Activated CD4-positive, alpha-beta memory T cell treated with anti-CD3 and anti-CD28 coated beads, Interleukin-2, amount 10 ng/mL, durations not matched to agents 7 days and 5 days (primary cell): ENCODE measurements at regions of chr3 and their contacts with region 1.

Region 1: GRCh38 chr3:52291508-52292181 is 4.0 kb downstream of the GLYCTK start:
- DNase-seq: peak; percentile 47
- H3K4me3 Mint-ChIP-seq: no peak overlapping the region
- H3K27ac Mint-ChIP-seq: peak overlapping the region; percentile 35
- H3K4me1 Mint-ChIP-seq: peaks cover 33% of the 10 kb centered on the region
- H3K27me3 Mint-ChIP-seq: no peaks in the 10 kb centered on the region

Region 2: DNA sequence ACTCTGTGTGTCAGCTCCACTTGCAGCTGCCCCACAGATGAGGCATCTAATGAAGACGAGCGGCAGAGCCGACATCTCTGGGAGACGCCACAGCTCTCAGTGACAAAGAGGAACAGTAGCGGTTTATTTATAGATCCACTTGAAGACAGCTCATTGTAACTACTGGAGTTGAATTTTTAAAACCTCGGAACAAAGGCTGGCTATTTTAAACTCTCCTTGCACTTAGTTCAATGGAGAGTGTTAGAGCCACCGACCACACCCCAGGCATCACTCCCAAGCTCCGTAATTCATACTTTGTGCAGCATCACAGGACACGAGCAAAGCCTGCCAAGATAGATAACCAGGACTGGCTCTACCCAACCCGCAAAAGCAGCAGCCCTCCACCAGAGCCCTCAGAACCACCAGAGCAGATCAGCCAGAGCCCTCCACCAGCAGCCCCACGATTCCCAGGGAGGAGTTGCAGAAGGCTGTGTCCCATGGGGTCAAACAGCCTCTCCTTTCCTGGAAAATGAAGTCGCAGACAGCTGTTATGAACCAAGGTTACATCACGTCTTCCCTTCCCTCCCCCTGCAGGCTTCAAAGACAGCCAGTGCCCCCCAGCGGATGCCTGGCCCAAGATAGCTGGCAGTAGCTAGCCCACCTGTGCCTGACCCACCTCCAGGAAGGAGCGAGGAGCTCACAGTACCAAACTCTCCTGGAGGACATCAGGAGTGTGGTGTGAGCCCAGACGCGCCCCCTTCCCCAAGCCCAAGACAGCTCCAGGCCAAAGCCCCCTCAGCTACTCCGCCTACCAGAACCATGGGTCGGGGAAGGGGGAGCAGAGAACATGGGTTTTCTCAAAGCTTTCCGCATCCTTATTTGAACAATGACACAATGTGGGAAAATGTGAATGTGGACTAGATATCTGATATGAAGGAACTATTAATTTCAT is 183.1 kb before region 1 on chr3:
- CTCF ChIA-PET with region 1: no interaction called
- POLR2A ChIA-PET with region 1: no interaction called
- DNase-seq: no peak
- H3K4me3 Mint-ChIP-seq: no peak overlapping the region
- H3K27ac Mint-ChIP-seq: no peak overlapping the region
- H3K4me1 Mint-ChIP-seq: peaks cover 1% of the 10 kb centered on the region
- H3K27me3 Mint-ChIP-seq: no peaks in the 10 kb centered on the region

Region 3: GRCh38 chr3:52162250-52162872 is 129.3 kb before region 1 on chr3:
- CTCF ChIA-PET with region 1: no interaction called
- POLR2A ChIA-PET with region 1: no interaction called
- DNase-seq: no peak
- H3K4me3 Mint-ChIP-seq: no peak overlapping the region
- H3K27ac Mint-ChIP-seq: no peak overlapping the region
- H3K4me1 Mint-ChIP-seq: no peaks in the 10 kb centered on the region
- H3K27me3 Mint-ChIP-seq: peaks cover 8% of the 10 kb centered on the region

Region 4: GRCh38 chr3:52231502-52232293 is 59.9 kb before region 1 on chr3:
- CTCF ChIA-PET with region 1: interaction called, 8 read pairs
- POLR2A ChIA-PET with region 1: interaction called, 1,001 read pairs
- DNase-seq: peak; percentile 87
- H3K4me3 Mint-ChIP-seq: no peak overlapping the region
- H3K27ac Mint-ChIP-seq: peak overlapping the region; percentile 63
- H3K4me1 Mint-ChIP-seq: peaks cover 45% of the 10 kb centered on the region
- H3K27me3 Mint-ChIP-seq: no peaks in the 10 kb centered on the region

Region 5: DNA sequence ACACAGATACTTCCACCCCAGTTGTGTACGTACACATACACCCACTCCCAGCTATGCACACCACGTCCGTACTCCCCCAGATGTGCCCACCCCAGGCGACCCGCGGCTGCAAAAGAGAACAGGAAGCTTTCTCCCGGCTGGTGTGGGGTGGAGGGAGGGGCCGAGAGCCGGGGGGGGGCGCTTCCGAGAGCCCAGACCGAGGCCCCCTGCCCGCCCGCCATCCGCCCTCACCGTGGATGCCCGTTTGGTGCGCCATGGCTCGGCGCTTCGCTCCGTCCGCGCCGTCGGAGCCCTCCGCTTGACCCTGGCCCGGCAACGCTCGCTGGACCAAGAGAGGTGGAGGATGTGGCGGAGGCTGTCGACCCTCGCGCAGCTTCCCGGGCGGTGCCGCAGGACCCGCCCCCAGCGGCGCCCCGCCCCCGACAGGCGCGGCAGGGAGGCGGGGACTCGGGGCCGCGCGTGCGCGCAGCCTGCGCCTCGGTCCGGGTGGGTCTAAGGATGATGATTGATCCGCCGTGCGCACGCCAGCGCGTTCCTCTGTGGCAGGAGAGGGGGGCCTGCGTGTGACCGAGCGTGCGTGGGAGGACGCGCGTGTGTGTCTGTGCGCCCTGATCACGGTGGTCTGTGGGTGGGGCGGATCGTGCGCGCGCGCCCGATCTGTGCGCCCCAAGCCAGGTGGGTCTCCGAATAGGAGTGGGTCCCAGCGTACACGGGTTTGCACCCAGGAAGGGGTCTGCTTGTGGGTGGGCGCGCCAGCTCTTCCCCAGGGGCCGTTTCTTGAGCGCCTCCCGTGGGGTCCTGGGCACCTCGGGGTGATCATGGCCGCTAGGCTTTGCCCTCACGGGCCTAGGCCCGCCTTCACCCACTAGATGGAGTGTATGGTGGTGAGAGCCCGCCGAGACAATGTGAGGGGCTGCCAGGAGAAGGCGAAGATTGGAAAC is 52.6 kb before region 1 on chr3 and contains the start of gene TWF2:
- CTCF ChIA-PET with region 1: interaction called, 11 read pairs
- POLR2A ChIA-PET with region 1: interaction called, 1,001 read pairs
- DNase-seq: peak; percentile 87
- H3K4me3 Mint-ChIP-seq: peak within 1 kb of the TSS; percentile 95
- H3K27ac Mint-ChIP-seq: peak within 1 kb of the TSS; percentile 97
- H3K4me1 Mint-ChIP-seq: peaks cover 77% of the 10 kb centered on the region
- H3K27me3 Mint-ChIP-seq: no peaks in the 10 kb centered on the region
- total RNA-seq, gene TWF2: 118 to 119 TPM

Region 6: DNA sequence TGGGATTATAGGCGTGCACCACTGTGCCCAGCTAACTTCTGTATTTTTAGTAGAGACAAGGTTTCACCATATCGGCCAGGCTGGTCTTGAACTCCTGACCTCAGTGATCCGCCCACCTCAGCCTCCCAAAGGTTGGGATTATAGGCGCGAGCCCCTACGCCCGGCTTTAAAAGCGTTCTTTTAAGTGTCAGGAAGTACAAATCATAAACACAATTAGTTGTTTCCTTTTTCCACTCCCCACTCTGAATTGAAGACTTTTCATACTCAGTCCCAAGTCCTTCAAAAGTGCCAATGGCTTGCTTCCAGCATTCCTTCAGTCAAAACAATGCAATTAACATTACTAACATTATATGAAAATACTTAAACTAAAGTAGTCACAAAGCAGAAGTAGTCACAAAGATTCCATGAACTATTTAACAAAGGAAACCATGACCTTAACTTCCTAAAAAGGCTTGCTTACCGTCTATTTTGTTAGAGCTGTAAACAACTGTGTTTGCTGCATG is 21.3 kb before region 1 on chr3:
- CTCF ChIA-PET with region 1: interaction called, 5 read pairs
- POLR2A ChIA-PET with region 1: interaction called, 135 read pairs
- DNase-seq: no peak
- H3K4me3 Mint-ChIP-seq: peak overlapping the region; percentile 72
- H3K27ac Mint-ChIP-seq: peak overlapping the region; percentile 91
- H3K4me1 Mint-ChIP-seq: peaks cover 87% of the 10 kb centered on the region
- H3K27me3 Mint-ChIP-seq: no peaks in the 10 kb centered on the region

Region 7: DNA sequence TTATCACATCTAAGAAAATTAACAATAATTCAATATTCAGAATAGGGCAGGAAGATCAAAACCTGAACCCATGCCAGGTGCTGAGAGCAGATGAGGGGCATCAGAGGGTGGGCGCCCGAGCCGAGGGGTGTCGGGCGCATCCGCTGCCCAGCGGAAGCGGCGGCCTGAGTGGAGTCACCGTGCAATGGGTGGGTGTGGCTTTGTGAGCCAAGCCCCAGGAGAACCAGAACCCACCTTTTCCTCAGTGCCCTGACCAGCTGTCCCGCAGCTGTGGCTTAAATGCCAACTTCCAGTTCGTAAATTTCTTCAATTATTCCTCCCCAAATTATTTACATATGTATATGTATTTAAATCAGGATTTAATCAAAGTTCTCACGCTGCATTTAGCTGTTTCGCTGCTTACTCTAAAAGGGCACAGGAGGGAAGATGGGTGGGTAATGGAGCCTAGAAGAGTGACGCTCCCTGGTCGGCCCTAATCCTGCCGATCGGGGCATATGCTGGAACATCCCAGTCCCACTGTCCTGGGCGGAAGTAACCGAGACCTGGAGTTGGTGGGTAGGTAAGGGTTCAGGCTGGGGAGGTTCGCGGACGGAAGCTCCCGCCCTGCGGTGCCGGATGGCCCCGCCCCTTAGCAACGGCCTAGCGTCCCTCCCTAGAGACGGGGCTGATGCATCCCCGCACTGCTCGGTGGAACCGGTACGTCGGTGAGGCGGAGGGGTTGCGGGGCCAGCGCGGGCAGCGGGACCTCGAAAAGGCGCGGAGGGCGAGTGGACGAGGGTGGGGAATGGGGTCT is 25.8 kb after region 1 on chr3:
- CTCF ChIA-PET with region 1: no interaction called
- POLR2A ChIA-PET with region 1: interaction called, 14 read pairs
- DNase-seq: peak; percentile 79
- H3K4me3 Mint-ChIP-seq: peak overlapping the region; percentile 51
- H3K27ac Mint-ChIP-seq: no peak overlapping the region
- H3K4me1 Mint-ChIP-seq: peaks cover 26% of the 10 kb centered on the region
- H3K27me3 Mint-ChIP-seq: no peaks in the 10 kb centered on the region

Region 8: GRCh38 chr3:52339612-52340011 is 48.0 kb after region 1 on chr3:
- CTCF ChIA-PET with region 1: interaction called, 46 read pairs
- POLR2A ChIA-PET with region 1: interaction called, 5 read pairs
- DNase-seq: peak; percentile 49
- H3K4me3 Mint-ChIP-seq: no peak overlapping the region
- H3K27ac Mint-ChIP-seq: no peak overlapping the region
- H3K4me1 Mint-ChIP-seq: peaks cover 8% of the 10 kb centered on the region
- H3K27me3 Mint-ChIP-seq: no peaks in the 10 kb centered on the region